Left ventricle myocardium superior (tissue), 1 donor: ENCODE measurements at regions of chr17 and their contacts with region 1.

Region 1: DNA sequence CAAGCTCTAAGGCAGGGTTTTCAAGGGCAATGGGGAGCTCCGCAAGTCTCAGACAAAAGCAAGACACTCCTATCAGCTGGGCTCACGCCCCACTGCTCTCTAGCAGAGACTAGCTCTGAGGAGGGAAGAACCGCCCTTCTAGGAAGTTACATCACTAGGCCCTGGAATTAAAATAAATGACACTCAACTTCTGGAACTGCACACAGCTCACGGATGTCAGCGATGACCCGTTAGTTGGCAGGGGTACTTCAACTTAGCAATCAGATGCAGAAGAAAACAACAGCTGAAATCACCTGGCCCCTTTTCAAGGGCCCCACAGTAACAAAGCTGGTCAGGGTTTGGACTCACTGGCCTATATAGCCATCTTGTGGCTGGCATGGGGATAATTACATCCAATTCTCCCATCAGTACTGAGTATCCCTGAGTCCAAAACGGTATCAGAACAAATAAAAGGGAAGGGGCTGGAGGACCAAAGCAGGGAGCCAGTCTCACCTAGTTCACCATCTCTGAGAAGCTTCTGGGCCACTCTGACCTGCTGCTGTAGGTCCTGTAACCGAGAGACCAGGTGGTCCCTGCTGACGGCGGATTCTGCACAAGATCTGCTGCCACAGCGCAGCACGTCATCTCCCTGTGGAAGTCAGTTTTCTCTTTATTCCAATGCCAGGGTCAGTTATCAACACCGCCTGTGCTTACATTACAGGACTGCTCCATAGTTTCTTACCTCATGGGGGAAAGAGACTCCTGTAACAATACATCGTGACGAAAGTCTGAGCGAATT is 22.2 kb downstream of the SERPINF1 start:
- DNase-seq: peak; percentile 82
- ATAC-seq: peak; percentile 73

Region 2: GRCh38 chr17:1606352-1607033 is 177.5 kb before region 1 on chr17:
- intact Hi-C with region 1: no loop called
- DNase-seq: no peak
- ATAC-seq: no peak

Region 3: DNA sequence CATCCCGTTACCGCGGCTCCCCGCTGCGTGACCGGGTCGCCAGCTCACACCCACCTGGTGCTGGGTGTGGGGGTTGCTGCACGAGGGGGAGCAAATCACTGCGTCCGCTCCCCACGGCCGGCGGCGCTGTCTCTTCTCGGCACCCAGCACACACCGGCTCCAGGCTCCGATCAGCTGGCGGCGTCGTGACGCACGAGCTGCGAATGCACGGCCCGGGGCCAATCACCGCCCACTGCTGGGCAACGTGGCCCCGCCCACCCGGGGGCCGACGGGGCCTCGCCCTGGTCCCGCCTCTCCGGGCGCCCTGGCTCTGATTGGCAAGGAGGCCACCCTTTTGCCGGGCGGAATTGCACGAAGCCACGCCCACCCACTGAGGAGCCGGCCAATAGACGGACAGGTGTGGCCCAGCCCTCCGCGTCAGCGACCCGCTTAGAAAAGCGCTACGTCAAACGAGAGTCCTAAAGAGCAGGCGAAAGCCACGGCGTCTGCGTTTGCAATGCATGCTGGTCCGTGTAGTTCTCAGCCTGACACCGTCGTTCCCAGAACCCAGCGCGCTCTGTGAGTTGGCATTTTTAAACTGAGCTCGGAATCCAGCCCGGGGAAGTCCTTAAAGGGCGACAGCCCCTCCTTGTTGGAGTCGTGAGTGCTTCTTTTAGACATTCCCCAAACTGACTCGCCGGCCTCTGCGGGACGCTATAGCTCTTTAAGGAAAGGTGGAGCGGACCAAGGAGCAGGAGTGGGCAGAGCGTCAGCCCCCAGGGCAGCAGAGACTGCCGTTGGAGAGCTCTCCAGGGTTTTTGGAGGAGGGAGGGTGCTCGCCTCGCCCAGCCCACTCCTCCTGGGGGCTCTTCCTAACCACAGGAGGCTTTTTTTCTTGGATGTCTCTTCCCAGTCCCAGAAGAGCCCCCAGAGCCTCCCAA is 67.7 kb before region 1 on chr17:
- intact Hi-C with region 1: loop called (anchors 5 kb)
- DNase-seq: peak; percentile 100
- ATAC-seq: peak; percentile 72

Region 4: GRCh38 chr17:1829592-1830257 is 45.7 kb after region 1 on chr17 and contains the starts of genes RPA1 and SMYD4:
- intact Hi-C with region 1: loop called (anchors 2 kb)
- DNase-seq: peak; percentile 95
- ATAC-seq: peak; percentile 100
- total RNA-seq, gene RPA1: 46.0 TPM
- total RNA-seq, gene SMYD4: 6.9 TPM